Cardiac septum (tissue), 1 donor: ENCODE measurements at regions of chr3 and their contacts with region 1.

Region 1: GRCh38 chr3:17233398-17233800 is 348.6 kb downstream of the PLCL2 start:
- DNase-seq: no peak

Region 2: DNA sequence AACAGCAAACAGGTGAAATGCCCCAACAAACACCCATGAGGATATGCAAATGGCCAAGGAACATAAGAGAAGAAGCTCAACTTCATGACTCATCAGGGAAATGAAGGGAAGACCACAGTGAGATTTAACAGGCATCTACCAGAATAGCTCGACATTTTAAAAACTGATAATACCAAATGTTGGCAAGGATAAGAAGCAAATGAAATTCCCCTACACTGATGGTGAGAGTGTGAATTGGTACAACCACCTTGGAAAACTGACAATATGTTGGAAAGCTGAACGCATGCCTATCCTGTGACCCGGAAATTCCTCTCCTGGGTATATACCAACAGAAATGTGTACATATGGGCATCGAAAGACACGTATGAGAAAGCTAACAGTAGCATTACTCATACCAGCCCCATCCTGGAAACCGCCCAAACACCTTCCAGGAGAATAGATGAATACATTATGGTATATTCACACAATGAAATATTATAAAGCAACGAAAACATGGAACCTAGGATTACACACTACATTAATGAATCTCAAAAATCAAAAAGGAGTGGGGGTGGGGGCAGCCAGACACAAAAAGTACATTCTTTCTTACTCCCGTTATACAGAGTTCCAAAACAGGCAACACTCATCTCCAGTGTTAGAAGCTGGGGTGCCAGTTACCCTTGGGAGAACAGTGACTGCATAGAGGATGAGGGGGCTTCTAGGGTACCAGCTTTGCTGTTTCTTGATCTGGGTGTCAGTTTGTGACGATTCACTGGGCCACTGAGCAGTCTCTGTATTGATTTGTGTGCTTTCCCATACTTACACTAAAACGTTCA is 736.8 kb before region 1 on chr3:
- intact Hi-C with region 1: no loop called
- DNase-seq: no peak

Region 3: GRCh38 chr3:16838561-16838960 is 394.8 kb before region 1 on chr3:
- intact Hi-C with region 1: loop called (anchors 10 kb)
- DNase-seq: no peak

Region 4: GRCh38 chr3:17032407-17033034 is 200.9 kb before region 1 on chr3:
- intact Hi-C with region 1: loop called (anchors 10 kb)
- DNase-seq: no peak

Region 5: DNA sequence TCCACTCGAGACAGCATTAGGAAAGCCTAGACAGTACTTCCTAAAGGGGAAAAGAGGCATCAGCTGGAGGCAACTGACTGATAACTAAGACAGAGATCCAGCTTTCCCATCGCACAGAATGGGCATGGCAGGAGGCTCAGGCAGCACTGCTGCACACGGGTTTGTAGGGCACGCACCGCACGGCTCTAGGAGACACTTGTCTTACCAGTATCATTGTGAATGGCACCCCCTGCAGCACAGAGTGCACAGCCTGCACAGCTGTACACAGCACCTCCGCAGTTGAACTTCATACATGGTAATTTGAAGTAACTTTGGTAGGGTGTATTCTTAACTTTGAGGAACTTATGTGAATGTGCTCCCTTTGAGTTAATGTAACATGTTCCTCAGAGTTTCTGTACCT is 67.0 kb before region 1 on chr3:
- intact Hi-C with region 1: no loop called
- DNase-seq: no peak